Posterior vena cava (tissue), 2 donors: ENCODE measurements at regions of chr9 and their contacts with region 1.

Region 1: GRCh38 chr9:127734747-127735529 is at the start of gene TOR2A:
- DNase-seq: peak; percentile 100
- total RNA-seq, gene TOR2A: 4.9 to 8.2 TPM

Region 2: GRCh38 chr9:127519301-127520166 is 215.4 kb before region 1 on chr9:
- intact Hi-C with region 1: loop called in 1 of 2 experiments (anchors 5 kb)
- DNase-seq: peak; percentile 88

Region 3: GRCh38 chr9:127770905-127771569 is 36.1 kb after region 1 on chr9:
- intact Hi-C with region 1: no loop called
- DNase-seq: peak; percentile 100

Region 4: GRCh38 chr9:127785023-127785932 is 50.3 kb after region 1 on chr9:
- intact Hi-C with region 1: loop called (anchors 5 kb)
- DNase-seq: peak; percentile 96

Region 5: DNA sequence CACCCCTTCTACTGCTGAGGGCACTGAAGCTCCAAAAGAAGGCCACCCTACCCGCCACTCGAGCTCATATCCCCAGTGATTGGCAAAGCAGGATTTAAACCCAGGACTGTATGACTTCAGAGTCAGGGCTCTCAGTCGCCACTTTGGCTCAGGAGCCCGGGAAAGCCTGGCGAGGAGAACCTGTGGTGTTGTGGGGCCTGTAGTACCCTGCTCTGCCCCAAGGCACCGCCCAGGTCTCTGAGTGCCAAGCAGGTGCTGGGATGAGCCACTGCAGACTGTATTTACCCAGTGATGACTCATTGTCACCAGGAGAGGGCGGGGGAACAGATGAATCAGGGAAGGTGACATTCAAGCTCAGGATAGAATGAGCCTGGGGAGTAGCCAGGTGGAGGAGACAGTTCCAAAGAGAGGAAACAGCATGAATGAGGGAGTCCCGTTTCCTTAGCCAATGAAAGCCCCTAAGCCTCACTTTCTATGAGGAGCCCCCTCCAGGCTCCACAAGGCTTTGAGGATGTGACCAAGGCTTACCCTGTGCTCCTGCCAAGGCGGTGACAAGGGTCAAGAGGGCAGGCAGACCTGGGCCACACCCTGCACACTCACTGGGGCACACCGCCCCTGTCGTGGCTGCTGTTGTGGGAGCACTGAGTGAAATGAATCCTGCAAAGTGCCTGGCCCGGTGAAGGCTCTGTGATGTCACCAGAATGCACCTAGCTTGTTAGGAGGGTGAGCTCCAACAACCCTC is 220.5 kb after region 1 on chr9:
- intact Hi-C with region 1: no loop called
- DNase-seq: no peak

Region 6: DNA sequence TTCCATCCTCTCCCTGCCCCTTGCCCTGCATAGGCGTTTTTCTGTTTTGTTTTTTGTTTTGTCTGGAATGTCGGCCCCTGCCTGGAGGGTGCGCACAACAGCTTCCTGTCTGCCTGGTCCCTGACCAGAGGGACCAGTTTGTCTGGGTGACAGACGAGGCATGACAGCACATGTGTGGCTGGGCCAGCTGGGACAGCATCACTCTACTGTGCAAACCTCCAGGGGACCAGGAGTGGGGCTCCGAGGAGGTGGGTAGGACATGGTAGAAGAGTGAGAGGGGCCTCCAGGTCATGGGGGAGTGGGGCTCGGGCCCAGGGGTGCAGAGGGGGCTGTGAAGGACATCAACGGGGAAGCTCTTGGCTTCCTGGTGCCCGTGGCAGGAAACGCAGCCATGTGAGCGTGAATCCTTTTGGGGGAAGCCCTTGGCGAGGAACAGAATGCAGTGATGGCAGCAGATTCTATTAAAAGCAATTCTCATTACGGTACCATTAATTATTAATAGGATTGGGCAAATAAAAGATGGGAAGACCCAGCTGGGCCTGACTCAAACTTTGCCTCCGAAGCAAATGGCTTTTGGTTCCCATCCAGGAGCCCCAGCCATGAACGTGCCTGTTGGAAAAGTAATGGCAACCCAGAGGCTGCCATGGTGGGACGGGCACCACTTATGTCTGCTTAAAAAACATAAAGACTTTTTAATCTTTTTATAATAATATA is 1627.5 kb after region 1 on chr9:
- intact Hi-C with region 1: no loop called
- DNase-seq: no peak